ENCODE measurements at regions of chr18 and their contacts with region 1.

Region 1: GRCh38 chr18:80034068-80034851 is at the start of gene RBFA:
- DNase-seq: peak; percentile 85 to 96
- H3K4me3 ChIP-seq: peak within 1 kb of the TSS; percentile 84
- H3K27ac ChIP-seq: peak within 1 kb of the TSS; percentile 68
- H3K4me1 ChIP-seq: peaks cover 20% of the 10 kb centered on the region
- H3K27me3 ChIP-seq: no peaks in the 10 kb centered on the region
- CTCF ChIP-seq: peak; percentile 61
- total RNA-seq, gene RBFA: 22.4 and 25.1 TPM in 2 replicates

Region 2: GRCh38 chr18:79951578-79952455 is 82.4 kb before region 1 on chr18 and contains the start of gene SLC66A2:
- CTCF ChIA-PET with region 1: no interaction called
- POLR2A ChIA-PET with region 1: no interaction called
- intact Hi-C with region 1: loop called (anchors 1 kb)
- DNase-seq: peak; percentile 52 to 82
- H3K4me3 ChIP-seq: peak within 1 kb of the TSS; percentile 69
- H3K27ac ChIP-seq: no peak within 1 kb of the TSS
- H3K4me1 ChIP-seq: peaks cover 11% of the 10 kb centered on the region; the same call in 1 of the 2 replicates
- H3K27me3 ChIP-seq: no peaks in the 10 kb centered on the region
- CTCF ChIP-seq: no peak
- total RNA-seq, gene SLC66A2: 24.3 and 28.0 TPM in 2 replicates

Region 3: DNA sequence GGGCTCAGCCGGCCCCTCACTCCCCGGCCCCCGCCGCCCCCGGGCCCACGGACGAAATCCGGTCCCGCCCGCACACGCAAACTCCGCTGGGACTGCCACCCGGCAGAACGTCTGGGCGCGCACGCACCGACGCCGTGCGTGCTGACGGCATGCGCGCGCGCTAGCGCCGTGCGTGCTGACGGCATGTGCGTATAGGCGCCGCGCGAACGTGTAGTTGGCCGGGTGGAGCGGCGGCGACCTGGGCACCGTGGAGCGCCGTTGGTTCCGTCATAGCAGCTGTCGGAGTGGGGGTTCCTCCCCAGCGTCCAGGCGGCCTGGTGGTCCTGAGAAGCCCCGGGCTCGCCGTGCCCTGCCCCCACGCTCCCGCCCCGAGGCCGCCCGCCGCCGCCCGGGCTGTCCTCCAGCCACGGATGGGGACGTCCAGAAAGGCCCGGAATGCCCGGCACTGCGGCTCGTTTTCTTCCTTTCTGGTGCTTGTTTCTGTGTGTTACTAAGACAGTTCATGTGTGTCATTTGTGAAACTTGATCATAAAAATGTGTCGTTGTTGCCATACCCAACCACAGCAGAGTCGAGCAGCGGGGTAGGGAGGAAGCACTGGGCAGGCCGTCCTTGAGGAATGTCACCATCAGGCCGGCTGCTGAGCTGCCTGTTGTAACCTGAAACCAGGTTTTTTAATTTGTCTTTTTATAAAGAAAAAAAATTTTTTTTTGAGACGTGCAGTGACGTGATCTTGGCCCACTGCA is 45.6 kb before region 1 on chr18 and contains the start of gene TXNL4A:
- CTCF ChIA-PET with region 1: no interaction called
- POLR2A ChIA-PET with region 1: interaction called, 4 read pairs
- intact Hi-C with region 1: loop called (anchors 2 kb)
- DNase-seq: peak; percentile 67 to 70
- H3K4me3 ChIP-seq: peak within 1 kb of the TSS; percentile 88
- H3K27ac ChIP-seq: peak within 1 kb of the TSS; percentile 82
- H3K4me1 ChIP-seq: peaks cover 23% of the 10 kb centered on the region
- H3K27me3 ChIP-seq: no peaks in the 10 kb centered on the region
- CTCF ChIP-seq: no peak
- total RNA-seq, gene TXNL4A: 106 and 120 TPM in 2 replicates

Region 4: DNA sequence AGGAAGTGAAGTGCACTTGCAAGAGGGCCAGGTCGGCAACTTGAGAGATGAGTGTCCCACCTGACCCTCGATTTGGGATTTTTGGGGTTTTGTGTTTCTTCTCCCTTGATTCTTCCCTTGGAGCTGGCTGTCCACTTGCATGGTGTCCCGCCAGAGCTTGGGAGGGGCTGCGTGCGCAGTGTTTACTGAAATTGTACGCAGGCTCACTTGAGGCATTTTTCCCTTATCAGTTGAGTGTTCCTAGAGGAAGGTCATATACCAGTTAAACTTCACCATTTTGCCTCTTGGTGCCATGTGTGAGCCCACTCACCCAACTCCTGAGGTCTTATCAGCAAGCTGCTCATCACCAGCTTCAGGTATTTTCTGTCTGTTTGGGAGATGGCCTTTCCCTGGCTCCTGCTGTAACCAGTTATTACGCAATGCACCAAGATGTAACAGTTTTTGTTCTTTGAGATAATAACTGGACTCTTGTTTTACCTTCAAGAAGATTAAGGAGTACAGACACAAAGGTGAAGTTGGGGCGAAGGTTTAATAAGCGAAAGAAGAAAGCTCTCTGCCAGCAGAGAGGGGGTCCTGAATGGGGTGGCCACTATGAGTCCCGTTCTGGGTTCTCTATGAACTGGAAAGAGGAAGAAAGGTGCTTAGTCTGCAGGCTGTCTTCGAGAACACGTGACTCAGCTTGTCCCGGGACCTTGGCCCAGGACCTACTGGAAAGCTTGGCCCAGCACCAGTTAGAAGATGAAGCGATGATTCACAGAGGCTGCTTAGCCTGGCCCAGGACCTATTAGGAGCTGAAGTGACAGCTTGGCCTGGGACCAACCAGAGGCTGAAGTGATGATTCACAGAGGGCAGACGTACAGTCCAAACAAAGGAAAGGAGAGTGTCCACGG is 24.4 kb before region 1 on chr18:
- CTCF ChIA-PET with region 1: no interaction called
- POLR2A ChIA-PET with region 1: no interaction called
- intact Hi-C with region 1: no loop called
- DNase-seq: peak; percentile 35 to 71
- H3K4me3 ChIP-seq: no peak overlapping the region
- H3K27ac ChIP-seq: no peak overlapping the region
- H3K4me1 ChIP-seq: no peaks in the 10 kb centered on the region
- H3K27me3 ChIP-seq: no peaks in the 10 kb centered on the region
- CTCF ChIP-seq: no peak

Region 5: GRCh38 chr18:80108728-80109675 is 74.7 kb after region 1 on chr18 and contains the start of gene ADNP2:
- CTCF ChIA-PET with region 1: no interaction called
- POLR2A ChIA-PET with region 1: interaction called, 7 read pairs
- intact Hi-C with region 1: loop called (anchors 1 kb)
- DNase-seq: peak; percentile 81 to 92
- H3K4me3 ChIP-seq: peak within 1 kb of the TSS; percentile 81
- H3K27ac ChIP-seq: peak within 1 kb of the TSS; percentile 74
- H3K4me1 ChIP-seq: peaks cover 12% of the 10 kb centered on the region
- H3K27me3 ChIP-seq: no peaks in the 10 kb centered on the region
- CTCF ChIP-seq: no peak
- total RNA-seq, gene ADNP2: 12.6 and 13.8 TPM in 2 replicates

Region 6: GRCh38 chr18:80183273-80184050 is 149.2 kb after region 1 on chr18:
- CTCF ChIA-PET with region 1: no interaction called
- POLR2A ChIA-PET with region 1: no interaction called
- intact Hi-C with region 1: no loop called
- DNase-seq: no peak
- H3K4me3 ChIP-seq: no peak overlapping the region
- H3K27ac ChIP-seq: no peak overlapping the region
- H3K4me1 ChIP-seq: no peaks in the 10 kb centered on the region
- H3K27me3 ChIP-seq: peaks cover 80% of the 10 kb centered on the region
- CTCF ChIP-seq: no peak

Measured in PC-9 (cell line).